CD4-positive, alpha-beta memory T cell (primary cell): ENCODE measurements at regions of chrX and their contacts with region 1.

Region 1: DNA sequence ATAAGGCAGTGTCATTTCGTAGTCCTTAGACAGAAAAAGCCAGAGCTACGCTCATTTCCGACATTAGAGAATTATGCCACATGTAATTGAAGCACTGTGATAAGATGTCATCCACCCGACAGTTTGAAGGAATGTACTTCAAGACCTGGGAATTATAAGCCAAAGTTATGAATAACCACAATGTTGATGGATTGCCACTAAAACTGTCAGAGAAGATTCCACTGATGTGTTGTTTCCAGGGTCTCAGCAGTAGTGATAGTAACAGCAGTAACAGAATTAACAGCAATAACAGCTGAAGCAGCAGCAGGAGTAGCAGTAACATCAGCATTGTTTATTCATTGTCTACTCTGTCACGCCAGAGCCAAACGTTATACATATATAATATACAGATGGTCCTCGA is 24.7 kb downstream of the RAB33A start:
- DNase-seq: no peak
- H3K4me3 ChIP-seq: no peak overlapping the region
- H3K4me3 Mint-ChIP-seq: no peak overlapping the region
- H3K27ac ChIP-seq: no peak overlapping the region
- H3K27ac Mint-ChIP-seq: no peak overlapping the region
- H3K4me1 ChIP-seq: peaks cover 5% of the 10 kb centered on the region
- H3K4me1 Mint-ChIP-seq: peaks cover 0 to 5% (median 2%) of the 10 kb centered on the region in 4 donors
- H3K27me3 ChIP-seq: no peaks in the 10 kb centered on the region
- H3K27me3 Mint-ChIP-seq: peaks cover 0 to 2% of the 10 kb centered on the region in 2 donors

Region 2: GRCh38 chrX:129606918-129607317 is 589.5 kb before region 1 on chrX:
- CTCF ChIA-PET with region 1: no interaction called
- POLR2A ChIA-PET with region 1: no interaction called
- intact Hi-C with region 1: loop called (anchors 1 kb)
- DNase-seq: peak; percentile 48 to 65 (median 58)
- H3K4me3 ChIP-seq: no peak overlapping the region
- H3K4me3 Mint-ChIP-seq: peak overlapping the region in 1 of 8 donors; percentile 39
- H3K27ac ChIP-seq: no peak overlapping the region
- H3K27ac Mint-ChIP-seq: peak overlapping the region in 1 of 7 donors; percentile 50
- H3K4me1 ChIP-seq: peaks cover 12% of the 10 kb centered on the region
- H3K4me1 Mint-ChIP-seq: peaks cover 2 to 25% (median 18%) of the 10 kb centered on the region in 4 donors
- H3K27me3 ChIP-seq: no peaks in the 10 kb centered on the region
- H3K27me3 Mint-ChIP-seq: no peaks in the 10 kb centered on the region

Region 3: GRCh38 chrX:130144509-130144908 is 52.0 kb before region 1 on chrX:
- CTCF ChIA-PET with region 1: interaction called, 4 read pairs
- POLR2A ChIA-PET with region 1: no interaction called
- intact Hi-C with region 1: loop called (anchors 2 kb)
- DNase-seq: no peak
- H3K4me3 ChIP-seq: no peak overlapping the region
- H3K4me3 Mint-ChIP-seq: no peak overlapping the region
- H3K27ac ChIP-seq: no peak overlapping the region
- H3K27ac Mint-ChIP-seq: no peak overlapping the region
- H3K4me1 ChIP-seq: no peaks in the 10 kb centered on the region
- H3K4me1 Mint-ChIP-seq: peaks cover 0 to 5% (median 2%) of the 10 kb centered on the region in 4 donors
- H3K27me3 ChIP-seq: no peaks in the 10 kb centered on the region
- H3K27me3 Mint-ChIP-seq: no peaks in the 10 kb centered on the region